ENCODE measurements at regions of chr2 and their contacts with region 1.

Region 1: GRCh38 chr2:25700221-25700660 is 26.9 kb upstream of the DTNB start:
- DNase-seq: peak; percentile 73
- H3K4me3 ChIP-seq: no peak overlapping the region
- H3K27ac ChIP-seq: no peak overlapping the region
- H3K4me1 ChIP-seq: peaks cover 14% of the 10 kb centered on the region
- H3K27me3 ChIP-seq: peaks cover 0 to 4% of the 10 kb centered on the region in 2 experiments
- CTCF ChIP-seq: peak; percentile 63
- POLR2A ChIP-seq: no peak

Region 2: DNA sequence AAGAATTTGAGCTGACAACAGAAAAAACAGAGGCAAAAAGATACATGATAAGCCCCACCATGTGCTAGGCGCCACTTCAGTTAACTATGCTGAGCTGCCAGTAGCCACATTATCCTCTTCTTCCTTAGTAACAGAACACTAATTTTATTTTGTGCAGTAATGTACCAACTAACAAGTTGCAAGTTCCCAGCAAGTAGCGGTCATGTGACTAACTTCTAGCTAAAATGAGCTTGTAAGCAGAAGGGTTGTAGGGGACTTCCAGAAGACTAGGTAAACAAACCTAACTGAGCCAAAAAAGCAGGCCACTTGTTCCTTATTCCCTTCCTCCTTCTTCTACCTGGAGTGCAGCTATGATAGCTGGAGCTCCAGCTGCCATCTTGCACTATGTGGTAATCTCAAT is 102.4 kb before region 1 on chr2:
- CTCF ChIA-PET with region 1: interaction called, 12 read pairs
- POLR2A ChIA-PET with region 1: no interaction called
- dilution Hi-C with region 1: no loop called
- intact Hi-C with region 1: no loop called
- DNase-seq: no peak
- H3K4me3 ChIP-seq: no peak overlapping the region
- H3K27ac ChIP-seq: no peak overlapping the region
- H3K4me1 ChIP-seq: peaks cover 2% of the 10 kb centered on the region
- H3K27me3 ChIP-seq: no peaks in the 10 kb centered on the region
- CTCF ChIP-seq: no peak
- POLR2A ChIP-seq: no peak

Region 3: DNA sequence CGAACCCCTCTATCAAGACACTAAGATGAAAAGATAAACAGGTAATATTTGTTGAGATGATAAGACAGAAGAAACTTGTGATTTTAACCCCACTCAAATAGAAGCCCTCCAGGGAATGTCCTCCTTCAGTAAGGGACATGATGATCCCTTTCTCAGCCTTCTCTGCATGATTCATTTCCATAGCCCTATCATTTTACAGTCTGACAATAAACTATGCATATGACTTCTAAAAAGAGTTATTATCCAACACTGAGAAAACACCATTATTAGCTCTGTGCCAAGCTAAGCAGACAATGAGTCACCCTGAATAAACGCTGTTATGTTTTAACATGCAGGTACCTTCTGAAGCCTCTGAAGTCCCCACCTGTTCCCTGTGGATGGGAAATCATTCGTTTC is 81.6 kb before region 1 on chr2:
- CTCF ChIA-PET with region 1: interaction called, 31 read pairs
- POLR2A ChIA-PET with region 1: no interaction called
- dilution Hi-C with region 1: no loop called
- intact Hi-C with region 1: no loop called
- DNase-seq: peak; percentile 97
- H3K4me3 ChIP-seq: peak overlapping the region in 2 of 3 experiments; percentile 34 to 65
- H3K27ac ChIP-seq: peak overlapping the region; percentile 99
- H3K4me1 ChIP-seq: peaks cover 45% of the 10 kb centered on the region
- H3K27me3 ChIP-seq: no peaks in the 10 kb centered on the region
- CTCF ChIP-seq: no peak
- POLR2A ChIP-seq: no peak

Region 4: GRCh38 chr2:25673300-25674076 is 26.8 kb before region 1 on chr2 and contains the start of gene DTNB:
- CTCF ChIA-PET with region 1: interaction called, 38 read pairs
- POLR2A ChIA-PET with region 1: no interaction called
- dilution Hi-C with region 1: no loop called
- intact Hi-C with region 1: loop called (anchors 2 kb)
- DNase-seq: peak; percentile 64
- H3K4me3 ChIP-seq: peak within 1 kb of the TSS; percentile 23 to 92 (median 66)
- H3K27ac ChIP-seq: no peak within 1 kb of the TSS
- H3K4me1 ChIP-seq: peaks cover 7% of the 10 kb centered on the region
- H3K27me3 ChIP-seq: peaks cover 0 to 4% of the 10 kb centered on the region in 2 experiments
- CTCF ChIP-seq: no peak
- POLR2A ChIP-seq: peak; percentile 66
- total RNA-seq, gene DTNB: 13.9 and 17.0 TPM in 2 replicates

Region 5: DNA sequence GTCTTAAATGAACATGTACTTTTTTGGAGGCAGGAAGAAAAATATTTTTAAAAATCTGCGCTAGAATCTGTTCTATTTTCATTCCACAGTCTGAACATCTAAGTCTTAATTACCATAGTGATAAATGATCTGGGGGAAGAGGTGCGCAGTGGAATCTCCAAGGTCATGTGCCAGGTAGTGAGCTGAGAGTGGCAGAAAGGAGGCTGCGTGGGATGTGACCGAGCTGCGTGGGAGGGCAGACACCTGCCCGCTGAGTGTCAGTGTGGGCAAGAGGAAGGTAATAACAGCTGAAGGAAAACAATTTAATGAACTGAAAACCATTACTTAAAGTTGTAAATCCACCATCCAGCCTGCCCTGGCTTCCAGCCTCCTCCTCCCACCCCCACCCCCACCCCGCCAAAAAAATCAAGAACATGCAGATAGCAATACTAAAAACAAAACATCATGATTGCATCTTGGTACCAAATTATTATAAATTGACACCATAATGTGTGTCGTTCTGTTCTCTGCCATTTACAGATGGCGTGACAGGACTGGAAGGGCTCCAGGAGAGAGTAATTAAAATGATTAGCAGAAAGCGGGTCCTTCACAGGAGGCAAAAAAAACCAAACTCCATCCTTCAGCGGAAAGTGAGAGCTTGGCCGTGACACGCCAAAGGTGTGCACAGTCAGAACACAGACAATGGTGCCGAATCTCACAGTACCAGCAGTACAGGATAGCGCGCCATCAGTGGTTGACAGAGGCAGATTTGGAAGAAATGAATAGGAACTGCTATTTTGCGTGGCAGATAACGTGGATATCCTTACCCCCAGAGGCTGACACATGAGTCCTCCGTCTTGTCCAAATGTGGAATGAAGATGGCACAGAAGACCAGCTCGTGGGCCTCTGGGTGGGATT is 15.4 kb before region 1 on chr2:
- CTCF ChIA-PET with region 1: interaction called, 12 read pairs
- POLR2A ChIA-PET with region 1: no interaction called
- dilution Hi-C with region 1: no loop called
- intact Hi-C with region 1: no loop called
- DNase-seq: no peak
- H3K4me3 ChIP-seq: no peak overlapping the region
- H3K27ac ChIP-seq: no peak overlapping the region
- H3K4me1 ChIP-seq: no peaks in the 10 kb centered on the region
- H3K27me3 ChIP-seq: peaks cover 6% of the 10 kb centered on the region in 2 experiments
- CTCF ChIP-seq: no peak
- POLR2A ChIP-seq: no peak

Region 6: GRCh38 chr2:25690058-25690457 is 10.2 kb before region 1 on chr2:
- CTCF ChIA-PET with region 1: interaction called, 28 read pairs
- POLR2A ChIA-PET with region 1: no interaction called
- dilution Hi-C with region 1: no loop called
- intact Hi-C with region 1: no loop called
- DNase-seq: no peak
- H3K4me3 ChIP-seq: no peak overlapping the region
- H3K27ac ChIP-seq: no peak overlapping the region
- H3K4me1 ChIP-seq: no peaks in the 10 kb centered on the region
- H3K27me3 ChIP-seq: peaks cover 3 to 4% of the 10 kb centered on the region in 2 experiments
- CTCF ChIP-seq: no peak
- POLR2A ChIP-seq: no peak

Region 7: DNA sequence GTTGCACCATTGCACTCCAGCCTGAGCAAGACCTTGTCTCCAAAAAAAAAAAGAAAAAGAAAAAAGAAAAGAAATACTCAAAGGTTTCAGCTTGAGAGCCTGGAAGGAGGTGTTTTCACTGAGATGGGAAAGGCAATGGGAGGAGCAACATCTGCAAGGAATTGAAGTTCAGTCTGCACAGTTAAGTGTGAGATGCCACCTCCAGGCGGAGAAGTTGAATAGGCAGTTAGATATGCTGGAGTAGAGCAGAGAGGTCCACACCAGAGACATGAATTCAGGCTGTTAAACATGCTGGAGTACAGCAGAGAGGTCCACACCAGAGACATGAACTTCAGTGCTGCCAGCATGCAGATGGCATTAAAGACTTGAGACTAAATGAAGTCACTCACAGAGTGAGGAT is 14.5 kb after region 1 on chr2:
- CTCF ChIA-PET with region 1: interaction called, 32 read pairs
- POLR2A ChIA-PET with region 1: no interaction called
- dilution Hi-C with region 1: no loop called
- intact Hi-C with region 1: no loop called
- DNase-seq: no peak
- H3K4me3 ChIP-seq: no peak overlapping the region
- H3K27ac ChIP-seq: no peak overlapping the region
- H3K4me1 ChIP-seq: no peaks in the 10 kb centered on the region
- H3K27me3 ChIP-seq: peaks cover 3 to 5% of the 10 kb centered on the region in 2 experiments
- CTCF ChIP-seq: no peak
- POLR2A ChIP-seq: no peak

Region 8: DNA sequence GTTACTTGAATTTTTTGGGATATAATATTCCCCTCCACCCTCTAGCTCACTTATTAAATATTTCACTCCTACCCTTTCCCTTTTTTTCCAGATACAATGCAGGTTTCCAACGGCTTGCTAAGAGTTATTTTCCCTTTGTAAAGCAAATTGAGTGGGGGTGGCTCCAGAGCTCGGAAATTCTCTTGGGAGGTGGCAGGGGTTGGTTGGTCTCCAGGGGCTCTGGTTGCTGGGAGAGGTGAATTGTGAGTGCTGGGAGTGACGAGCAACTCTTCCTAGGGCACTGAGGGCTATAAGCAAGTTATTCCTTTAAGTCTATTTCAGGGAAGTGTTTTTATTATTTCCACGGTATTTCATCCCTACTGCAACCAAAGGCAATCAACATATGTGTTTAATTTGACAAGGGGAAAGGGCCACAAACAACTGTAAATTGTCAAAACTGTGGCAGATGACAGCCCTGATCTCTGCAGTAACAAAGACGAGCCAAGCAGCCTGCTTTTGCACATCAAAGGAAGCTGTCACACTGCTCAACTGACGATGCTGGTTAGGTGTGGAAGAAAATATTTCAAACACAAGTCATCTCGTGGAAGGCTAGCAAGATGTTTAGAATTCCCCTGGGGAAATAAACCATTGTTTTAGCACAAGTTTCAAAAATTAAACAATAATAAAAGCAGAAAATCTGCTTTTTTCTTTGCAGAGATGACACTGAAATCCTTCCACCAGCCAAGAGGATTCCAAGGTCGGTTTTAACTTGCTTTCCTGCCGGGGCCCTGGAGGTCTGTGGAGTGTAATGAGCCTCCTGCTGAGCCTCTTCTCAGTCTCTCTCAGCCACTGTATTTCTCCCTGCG is 212.8 kb after region 1 on chr2:
- CTCF ChIA-PET with region 1: no interaction called
- POLR2A ChIA-PET with region 1: no interaction called
- dilution Hi-C with region 1: no loop called
- intact Hi-C with region 1: no loop called
- DNase-seq: no peak
- H3K4me3 ChIP-seq: no peak overlapping the region
- H3K27ac ChIP-seq: no peak overlapping the region
- H3K4me1 ChIP-seq: no peaks in the 10 kb centered on the region
- H3K27me3 ChIP-seq: no peaks in the 10 kb centered on the region
- CTCF ChIP-seq: no peak
- POLR2A ChIP-seq: no peak

Measured in endothelial cell of umbilical vein (primary cell).